ENCODE measurements at regions of chr12 and their contacts with region 1.

Region 1: GRCh38 chr12:68158432-68158831 is 1.1 kb downstream of the IFNG start:
- DNase-seq: no peak
- H3K4me3 Mint-ChIP-seq: peak overlapping the region; percentile 13
- H3K27ac Mint-ChIP-seq: no peak overlapping the region
- H3K4me1 Mint-ChIP-seq: peaks cover 35% of the 10 kb centered on the region
- H3K27me3 Mint-ChIP-seq: no peaks in the 10 kb centered on the region

Region 2: GRCh38 chr12:67355578-67356379 is 802.7 kb before region 1 on chr12:
- intact Hi-C with region 1: loop called (anchors 10 kb)
- DNase-seq: no peak
- H3K4me3 Mint-ChIP-seq: no peak overlapping the region
- H3K27ac Mint-ChIP-seq: no peak overlapping the region
- H3K4me1 Mint-ChIP-seq: peaks cover 24% of the 10 kb centered on the region
- H3K27me3 Mint-ChIP-seq: peaks cover 6% of the 10 kb centered on the region

Region 3: GRCh38 chr12:68001486-68002466 is 156.7 kb before region 1 on chr12:
- intact Hi-C with region 1: loop called (anchors 1 kb)
- DNase-seq: no peak
- H3K4me3 Mint-ChIP-seq: no peak overlapping the region
- H3K27ac Mint-ChIP-seq: no peak overlapping the region
- H3K4me1 Mint-ChIP-seq: peaks cover 4% of the 10 kb centered on the region
- H3K27me3 Mint-ChIP-seq: peaks cover 1% of the 10 kb centered on the region

Region 4: GRCh38 chr12:68113644-68114043 is 44.8 kb before region 1 on chr12:
- intact Hi-C with region 1: loop called (anchors 1 kb)
- DNase-seq: no peak
- H3K4me3 Mint-ChIP-seq: no peak overlapping the region
- H3K27ac Mint-ChIP-seq: no peak overlapping the region
- H3K4me1 Mint-ChIP-seq: peaks cover 37% of the 10 kb centered on the region
- H3K27me3 Mint-ChIP-seq: no peaks in the 10 kb centered on the region

Region 5: GRCh38 chr12:68137335-68137830 is 21.0 kb before region 1 on chr12:
- intact Hi-C with region 1: loop called (anchors 2 kb)
- DNase-seq: no peak
- H3K4me3 Mint-ChIP-seq: no peak overlapping the region
- H3K27ac Mint-ChIP-seq: peak overlapping the region; percentile 26
- H3K4me1 Mint-ChIP-seq: peaks cover 53% of the 10 kb centered on the region
- H3K27me3 Mint-ChIP-seq: no peaks in the 10 kb centered on the region

Region 6: GRCh38 chr12:68175557-68176061 is 17.2 kb after region 1 on chr12:
- intact Hi-C with region 1: no loop called
- DNase-seq: peak; percentile 34
- H3K4me3 Mint-ChIP-seq: peak overlapping the region; percentile 13
- H3K27ac Mint-ChIP-seq: no peak overlapping the region
- H3K4me1 Mint-ChIP-seq: peaks cover 39% of the 10 kb centered on the region
- H3K27me3 Mint-ChIP-seq: peaks cover 6% of the 10 kb centered on the region

Region 7: GRCh38 chr12:68200854-68201253 is 42.4 kb after region 1 on chr12:
- intact Hi-C with region 1: loop called (anchors 5 kb)
- DNase-seq: no peak
- H3K4me3 Mint-ChIP-seq: no peak overlapping the region
- H3K27ac Mint-ChIP-seq: no peak overlapping the region
- H3K4me1 Mint-ChIP-seq: peaks cover 42% of the 10 kb centered on the region
- H3K27me3 Mint-ChIP-seq: peaks cover 44% of the 10 kb centered on the region

Measured in activated T-helper 2 cell treated with anti-CD3 and anti-CD28 coated beads, Interferon-gamma antibody, Interleukin-2, Interleukin-4, amounts not matched to agents 10 μg/mL and 5 μg/mL and 100 μg/mL, durations not matched to agents 14 hours and 24 hours and 36 hours (primary cell).